CD4-positive, alpha-beta memory T cell (primary cell): ENCODE measurements at regions of chr17 and their contacts with region 1.

Region 1: GRCh38 chr17:17681187-17681848 is at the start of gene RAI1:
- DNase-seq: peak; percentile 74 to 81 (median 78)
- H3K4me3 ChIP-seq: peak within 1 kb of the TSS in 1 of 2 donors; percentile 76
- H3K4me3 Mint-ChIP-seq: peak within 1 kb of the TSS; percentile 74 to 90 (median 88)
- H3K27ac ChIP-seq: peak within 1 kb of the TSS; percentile 71
- H3K27ac Mint-ChIP-seq: peak within 1 kb of the TSS; percentile 42 to 91 (median 86)
- H3K4me1 ChIP-seq: peaks cover 27% of the 10 kb centered on the region
- H3K4me1 Mint-ChIP-seq: peaks cover 9 to 38% (median 24%) of the 10 kb centered on the region in 4 donors
- H3K27me3 ChIP-seq: no peaks in the 10 kb centered on the region
- H3K27me3 Mint-ChIP-seq: peaks cover 0 to 5% of the 10 kb centered on the region in 2 donors
- total RNA-seq, gene RAI1: 15.4 to 19.5 TPM

Region 2: GRCh38 chr17:17591355-17592298 is 89.7 kb before region 1 on chr17 and contains the start of gene PEMT:
- CTCF ChIA-PET with region 1: no interaction called
- POLR2A ChIA-PET with region 1: no interaction called
- intact Hi-C with region 1: no loop called
- DNase-seq: peak; percentile 94 to 97 (median 94)
- H3K4me3 ChIP-seq: peak within 1 kb of the TSS; percentile 86 to 99
- H3K4me3 Mint-ChIP-seq: peak within 1 kb of the TSS; percentile 93 to 97 (median 95)
- H3K27ac ChIP-seq: peak within 1 kb of the TSS; percentile 73
- H3K27ac Mint-ChIP-seq: peak within 1 kb of the TSS; percentile 84 to 99 (median 96)
- H3K4me1 ChIP-seq: peaks cover 21% of the 10 kb centered on the region
- H3K4me1 Mint-ChIP-seq: peaks cover 11 to 29% (median 18%) of the 10 kb centered on the region in 4 donors
- H3K27me3 ChIP-seq: no peaks in the 10 kb centered on the region
- H3K27me3 Mint-ChIP-seq: no peaks in the 10 kb centered on the region
- total RNA-seq, gene PEMT: 11.6 to 13.8 TPM

Region 3: GRCh38 chr17:17694169-17695081 is 13.1 kb after region 1 on chr17:
- CTCF ChIA-PET with region 1: interaction called, 23 read pairs
- POLR2A ChIA-PET with region 1: interaction called, 44 read pairs
- intact Hi-C with region 1: loop called (anchors 1 kb)
- DNase-seq: peak; percentile 71 to 85 (median 77)
- H3K4me3 ChIP-seq: peak overlapping the region; percentile 38 to 63
- H3K4me3 Mint-ChIP-seq: peak overlapping the region; percentile 87 to 93 (median 89)
- H3K27ac ChIP-seq: peak overlapping the region; percentile 92
- H3K27ac Mint-ChIP-seq: peak overlapping the region; percentile 97 to 99 (median 99)
- H3K4me1 ChIP-seq: peaks cover 35% of the 10 kb centered on the region
- H3K4me1 Mint-ChIP-seq: peaks cover 16 to 66% (median 34%) of the 10 kb centered on the region in 4 donors
- H3K27me3 ChIP-seq: no peaks in the 10 kb centered on the region
- H3K27me3 Mint-ChIP-seq: no peaks in the 10 kb centered on the region

Region 4: GRCh38 chr17:17783116-17783824 is 102.0 kb after region 1 on chr17:
- CTCF ChIA-PET with region 1: interaction called, 4 read pairs
- POLR2A ChIA-PET with region 1: no interaction called
- intact Hi-C with region 1: loop called (anchors 5 kb)
- DNase-seq: peak; percentile 55 to 71 (median 61)
- H3K4me3 ChIP-seq: peak overlapping the region; percentile 29 to 56
- H3K4me3 Mint-ChIP-seq: peak overlapping the region; percentile 86 to 92 (median 88)
- H3K27ac ChIP-seq: no peak overlapping the region
- H3K27ac Mint-ChIP-seq: peak overlapping the region in 3 of 7 donors; percentile 20 to 42 (median 35)
- H3K4me1 ChIP-seq: peaks cover 18% of the 10 kb centered on the region
- H3K4me1 Mint-ChIP-seq: peaks cover 5 to 23% (median 16%) of the 10 kb centered on the region in 4 donors
- H3K27me3 ChIP-seq: no peaks in the 10 kb centered on the region
- H3K27me3 Mint-ChIP-seq: no peaks in the 10 kb centered on the region

Region 5: GRCh38 chr17:17859909-17860765 is 178.8 kb after region 1 on chr17:
- CTCF ChIA-PET with region 1: interaction called, 24 read pairs
- POLR2A ChIA-PET with region 1: interaction called, 3 read pairs
- intact Hi-C with region 1: loop called (anchors 1 kb)
- DNase-seq: peak; percentile 61 to 75 (median 69)
- H3K4me3 ChIP-seq: no peak overlapping the region
- H3K4me3 Mint-ChIP-seq: no peak overlapping the region
- H3K27ac ChIP-seq: no peak overlapping the region
- H3K27ac Mint-ChIP-seq: peak overlapping the region in 3 of 7 donors; percentile 25 to 56 (median 29)
- H3K4me1 ChIP-seq: peaks cover 22% of the 10 kb centered on the region
- H3K4me1 Mint-ChIP-seq: peaks cover 11 to 44% (median 22%) of the 10 kb centered on the region in 4 donors
- H3K27me3 ChIP-seq: no peaks in the 10 kb centered on the region
- H3K27me3 Mint-ChIP-seq: no peaks in the 10 kb centered on the region

Region 6: DNA sequence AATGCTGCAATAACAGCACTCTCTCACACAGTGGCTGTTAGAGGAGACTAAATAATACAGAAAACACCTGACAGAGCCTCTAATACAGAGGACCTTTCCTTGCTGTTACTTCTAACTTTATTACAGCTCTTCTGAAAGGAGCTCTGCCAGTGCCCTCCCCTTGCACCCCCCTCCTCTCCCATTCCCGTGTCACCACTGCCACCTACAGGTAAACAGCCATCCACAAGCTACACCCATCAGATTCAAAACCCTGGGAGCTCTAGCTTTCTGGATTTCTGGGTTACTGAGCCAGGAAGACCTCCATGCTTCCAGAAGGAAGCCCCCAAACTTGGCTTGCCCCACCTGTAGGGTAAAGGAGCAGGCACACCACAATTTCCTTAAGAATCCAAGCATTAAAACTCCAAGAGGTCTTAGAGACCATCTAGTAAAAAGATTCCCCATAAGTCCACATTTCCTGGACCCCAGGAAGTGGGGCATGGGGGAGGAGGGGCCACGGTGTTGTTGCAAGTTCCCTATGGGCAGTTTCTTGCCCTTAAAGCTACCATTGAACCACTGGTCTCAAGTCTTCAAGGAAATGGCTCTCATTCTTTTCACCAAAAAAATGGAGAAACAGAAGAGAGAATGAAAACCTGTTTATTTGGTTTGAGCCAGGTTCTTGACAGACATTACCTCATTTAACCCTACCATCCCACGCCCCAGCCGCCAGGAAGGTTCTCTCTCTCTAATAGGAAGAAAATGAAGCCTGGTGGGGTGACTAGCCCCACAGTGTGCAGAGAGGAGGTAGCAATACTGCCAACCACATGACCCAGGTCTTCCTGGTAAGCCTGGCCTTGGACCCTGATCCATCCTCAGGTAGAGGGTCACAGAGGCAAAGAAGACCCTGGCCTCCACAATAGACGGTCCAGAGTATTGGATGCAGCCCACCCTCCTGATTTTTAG is 238.1 kb after region 1 on chr17:
- CTCF ChIA-PET with region 1: interaction called, 21 read pairs
- POLR2A ChIA-PET with region 1: interaction called, 7 read pairs
- intact Hi-C with region 1: loop called (anchors 1 kb)
- DNase-seq: peak; percentile 58 to 71 (median 61)
- H3K4me3 ChIP-seq: no peak overlapping the region
- H3K4me3 Mint-ChIP-seq: no peak overlapping the region
- H3K27ac ChIP-seq: no peak overlapping the region
- H3K27ac Mint-ChIP-seq: no peak overlapping the region
- H3K4me1 ChIP-seq: peaks cover 3% of the 10 kb centered on the region
- H3K4me1 Mint-ChIP-seq: peaks cover 6 to 25% (median 8%) of the 10 kb centered on the region in 4 donors
- H3K27me3 ChIP-seq: no peaks in the 10 kb centered on the region
- H3K27me3 Mint-ChIP-seq: no peaks in the 10 kb centered on the region

Region 7: GRCh38 chr17:18033442-18034099 is 352.3 kb after region 1 on chr17:
- CTCF ChIA-PET with region 1: interaction called, 28 read pairs
- POLR2A ChIA-PET with region 1: interaction called, 8 read pairs
- intact Hi-C with region 1: loop called (anchors 1 kb)
- DNase-seq: peak; percentile 72 to 77 (median 74)
- H3K4me3 ChIP-seq: no peak overlapping the region
- H3K4me3 Mint-ChIP-seq: peak overlapping the region in 2 of 8 donors; percentile 12 to 26
- H3K27ac ChIP-seq: no peak overlapping the region
- H3K27ac Mint-ChIP-seq: peak overlapping the region in 6 of 7 donors; percentile 43 to 89 (median 76)
- H3K4me1 ChIP-seq: peaks cover 24% of the 10 kb centered on the region
- H3K4me1 Mint-ChIP-seq: peaks cover 17 to 38% (median 25%) of the 10 kb centered on the region in 4 donors
- H3K27me3 ChIP-seq: no peaks in the 10 kb centered on the region
- H3K27me3 Mint-ChIP-seq: no peaks in the 10 kb centered on the region